Activated CD4-positive, alpha-beta T cell treated with anti-CD3 and anti-CD28 coated beads, Interleukin-2, amount 10 ng/mL, durations not matched to agents 24 days and 14 days (primary cell): ENCODE measurements at regions of chr1 and their contacts with region 1.

Region 1: GRCh38 chr1:156226116-156226538 is 13.3 kb downstream of the PMF1 start:
- DNase-seq: peak; percentile 73
- H3K4me3 Mint-ChIP-seq: peak overlapping the region; percentile 26
- H3K27ac Mint-ChIP-seq: peak overlapping the region; percentile 90
- H3K4me1 Mint-ChIP-seq: peaks cover 48% of the 10 kb centered on the region
- H3K27me3 Mint-ChIP-seq: no peaks in the 10 kb centered on the region

Region 2: GRCh38 chr1:155744711-155745283 is 481.3 kb before region 1 on chr1:
- intact Hi-C with region 1: no loop called
- DNase-seq: no peak
- H3K4me3 Mint-ChIP-seq: peak overlapping the region; percentile 93
- H3K27ac Mint-ChIP-seq: peak overlapping the region; percentile 92
- H3K4me1 Mint-ChIP-seq: peaks cover 9% of the 10 kb centered on the region
- H3K27me3 Mint-ChIP-seq: no peaks in the 10 kb centered on the region

Region 3: GRCh38 chr1:156096640-156097391 is 129.3 kb before region 1 on chr1:
- intact Hi-C with region 1: loop called (anchors 1 kb)
- DNase-seq: peak; percentile 94
- H3K4me3 Mint-ChIP-seq: peak overlapping the region; percentile 47
- H3K27ac Mint-ChIP-seq: peak overlapping the region; percentile 97
- H3K4me1 Mint-ChIP-seq: peaks cover 46% of the 10 kb centered on the region
- H3K27me3 Mint-ChIP-seq: peaks cover 34% of the 10 kb centered on the region

Region 4: GRCh38 chr1:156140879-156141252 is 85.3 kb before region 1 on chr1:
- intact Hi-C with region 1: loop called (anchors 1 kb)
- DNase-seq: no peak
- H3K4me3 Mint-ChIP-seq: no peak overlapping the region
- H3K27ac Mint-ChIP-seq: no peak overlapping the region
- H3K4me1 Mint-ChIP-seq: peaks cover 4% of the 10 kb centered on the region
- H3K27me3 Mint-ChIP-seq: no peaks in the 10 kb centered on the region

Region 5: GRCh38 chr1:156193488-156194299 is 32.4 kb before region 1 on chr1 and contains the start of gene SLC25A44:
- intact Hi-C with region 1: loop called (anchors 1 kb)
- DNase-seq: peak; percentile 99
- H3K4me3 Mint-ChIP-seq: peak within 1 kb of the TSS; percentile 100
- H3K27ac Mint-ChIP-seq: peak within 1 kb of the TSS; percentile 97
- H3K4me1 Mint-ChIP-seq: peaks cover 52% of the 10 kb centered on the region
- H3K27me3 Mint-ChIP-seq: no peaks in the 10 kb centered on the region
- total RNA-seq, gene SLC25A44: 61.0 and 67.9 TPM in 2 replicates

Region 6: GRCh38 chr1:156212833-156213643 is 13.1 kb before region 1 on chr1 and contains the start of gene PMF1:
- intact Hi-C with region 1: loop called (anchors 1 kb)
- DNase-seq: peak; percentile 98
- H3K4me3 Mint-ChIP-seq: peak within 1 kb of the TSS; percentile 98
- H3K27ac Mint-ChIP-seq: peak within 1 kb of the TSS; percentile 99
- H3K4me1 Mint-ChIP-seq: peaks cover 38% of the 10 kb centered on the region
- H3K27me3 Mint-ChIP-seq: no peaks in the 10 kb centered on the region
- total RNA-seq, gene PMF1: 107 and 113 TPM in 2 replicates

Region 7: DNA sequence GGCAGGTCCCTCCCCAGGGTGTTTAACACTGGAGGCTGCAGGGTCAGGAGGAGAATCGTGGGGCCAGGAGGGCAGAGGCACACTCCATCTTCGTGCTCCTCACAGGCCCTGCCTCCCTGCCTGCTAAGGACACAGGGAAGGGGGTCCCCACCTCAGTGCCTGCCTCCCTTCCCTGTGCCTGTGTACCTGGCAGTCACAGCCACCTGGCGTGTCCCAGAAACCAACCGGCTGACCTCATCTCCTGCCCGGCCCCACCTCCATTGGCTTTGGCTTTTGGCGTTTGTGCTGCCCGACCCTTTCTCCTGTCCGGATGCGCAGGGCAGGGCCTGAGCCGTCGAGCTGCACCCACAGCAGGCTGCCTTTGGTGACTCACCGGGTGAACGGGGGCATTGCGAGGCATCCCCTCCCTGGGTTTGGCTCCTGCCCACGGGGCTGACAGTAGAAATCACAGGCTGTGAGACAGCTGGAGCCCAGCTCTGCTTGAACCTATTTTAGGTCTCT is 15.2 kb after region 1 on chr1:
- intact Hi-C with region 1: no loop called
- DNase-seq: no peak
- H3K4me3 Mint-ChIP-seq: no peak overlapping the region
- H3K27ac Mint-ChIP-seq: no peak overlapping the region
- H3K4me1 Mint-ChIP-seq: peaks cover 16% of the 10 kb centered on the region
- H3K27me3 Mint-ChIP-seq: no peaks in the 10 kb centered on the region